Sciatic nerve (tissue), 2 donors: ENCODE measurements at regions of chr1 and their contacts with region 1.

Region 1: GRCh38 chr1:6646499-6647148 is 22.0 kb downstream of the THAP3 start:
- DNase-seq: no peak
- ATAC-seq: peak; percentile 55

Region 2: GRCh38 chr1:6554031-6554906 is 92.4 kb before region 1 on chr1 and contains the start of gene NOL9:
- intact Hi-C with region 1: loop called (anchors 10 kb)
- DNase-seq: peak; percentile 97
- ATAC-seq: peak; percentile 98
- total RNA-seq, gene NOL9: 26.0 TPM